ENCODE measurements at regions of chr9 and their contacts with region 1.

Region 1: GRCh38 chr9:32004431-32005076 is 379.9 kb upstream of the ACO1 start:
- H3K4me3 Mint-ChIP-seq: no peak overlapping the region
- H3K27ac Mint-ChIP-seq: no peak overlapping the region
- H3K4me1 Mint-ChIP-seq: no peaks in the 10 kb centered on the region
- H3K27me3 Mint-ChIP-seq: no peaks in the 10 kb centered on the region

Region 2: GRCh38 chr9:31894008-31894407 is 110.5 kb before region 1 on chr9:
- intact Hi-C with region 1: no loop called
- H3K4me3 Mint-ChIP-seq: no peak overlapping the region
- H3K27ac Mint-ChIP-seq: no peak overlapping the region
- H3K4me1 Mint-ChIP-seq: no peaks in the 10 kb centered on the region
- H3K27me3 Mint-ChIP-seq: no peaks in the 10 kb centered on the region

Region 3: DNA sequence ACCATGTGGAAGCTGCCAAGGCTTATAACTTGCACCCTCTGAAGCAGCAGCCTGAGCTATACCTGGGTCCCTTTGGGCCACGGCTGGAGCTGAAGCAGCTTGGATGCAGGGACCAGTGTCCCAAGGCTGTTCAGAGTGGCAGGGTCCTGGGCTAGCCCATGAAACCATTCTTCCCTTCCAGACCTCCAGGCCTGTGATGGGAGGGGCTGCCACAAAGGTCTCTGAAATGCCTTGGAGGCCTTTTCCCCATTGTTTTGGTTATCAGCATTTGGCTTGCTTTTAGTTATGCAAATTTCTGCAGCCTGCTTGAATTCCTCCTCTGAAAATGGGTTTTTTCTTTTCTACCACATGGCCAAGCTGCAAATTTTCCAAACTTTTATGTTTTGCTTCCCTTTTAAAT is 53.8 kb before region 1 on chr9:
- intact Hi-C with region 1: loop called (anchors 10 kb)
- H3K4me3 Mint-ChIP-seq: no peak overlapping the region
- H3K27ac Mint-ChIP-seq: no peak overlapping the region
- H3K4me1 Mint-ChIP-seq: no peaks in the 10 kb centered on the region
- H3K27me3 Mint-ChIP-seq: no peaks in the 10 kb centered on the region

Measured in dendritic cell treated with granulocyte-macrophage colony-stimulating factor and Interleukin-4, amounts not matched to agents 40 ng/mL and 50 ng/mL, for 4 days (primary cell).